CD4-positive, alpha-beta T cell (primary cell): ENCODE measurements at regions of chr19 and their contacts with region 1.

Region 1: GRCh38 chr19:10095948-10096621 is 6.4 kb downstream of the ANGPTL6 start:
- DNase-seq: peak; percentile 78 to 98 (median 88)
- ATAC-seq: peak; percentile 88
- H3K4me3 ChIP-seq: peak overlapping the region; percentile 53
- H3K4me3 Mint-ChIP-seq: peak overlapping the region; percentile 65
- H3K27ac ChIP-seq: peak overlapping the region; percentile 48 to 56
- H3K27ac Mint-ChIP-seq: peak overlapping the region; percentile 83
- H3K4me1 ChIP-seq: peaks cover 50% of the 10 kb centered on the region
- H3K4me1 Mint-ChIP-seq: peaks cover 22% of the 10 kb centered on the region
- H3K27me3 ChIP-seq: no peaks in the 10 kb centered on the region
- H3K27me3 Mint-ChIP-seq: no peaks in the 10 kb centered on the region
- CTCF ChIP-seq: no peak

Region 2: GRCh38 chr19:10106100-10106936 is 10.2 kb after region 1 on chr19 and contains the start of gene PPAN:
- CTCF ChIA-PET with region 1: interaction called, 13 read pairs
- POLR2A ChIA-PET with region 1: interaction called, 80 read pairs
- intact Hi-C with region 1: no loop called
- DNase-seq: peak; percentile 94 to 100 (median 98)
- ATAC-seq: peak; percentile 59
- H3K4me3 ChIP-seq: peak within 1 kb of the TSS; percentile 73
- H3K4me3 Mint-ChIP-seq: peak within 1 kb of the TSS; percentile 93
- H3K27ac ChIP-seq: peak within 1 kb of the TSS; percentile 94 to 98
- H3K27ac Mint-ChIP-seq: peak within 1 kb of the TSS; percentile 95
- H3K4me1 ChIP-seq: peaks cover 86% of the 10 kb centered on the region
- H3K4me1 Mint-ChIP-seq: peaks cover 58% of the 10 kb centered on the region
- H3K27me3 ChIP-seq: no peaks in the 10 kb centered on the region
- H3K27me3 Mint-ChIP-seq: no peaks in the 10 kb centered on the region
- CTCF ChIP-seq: no peak
- total RNA-seq, gene PPAN: 119 to 127 TPM

Region 3: DNA sequence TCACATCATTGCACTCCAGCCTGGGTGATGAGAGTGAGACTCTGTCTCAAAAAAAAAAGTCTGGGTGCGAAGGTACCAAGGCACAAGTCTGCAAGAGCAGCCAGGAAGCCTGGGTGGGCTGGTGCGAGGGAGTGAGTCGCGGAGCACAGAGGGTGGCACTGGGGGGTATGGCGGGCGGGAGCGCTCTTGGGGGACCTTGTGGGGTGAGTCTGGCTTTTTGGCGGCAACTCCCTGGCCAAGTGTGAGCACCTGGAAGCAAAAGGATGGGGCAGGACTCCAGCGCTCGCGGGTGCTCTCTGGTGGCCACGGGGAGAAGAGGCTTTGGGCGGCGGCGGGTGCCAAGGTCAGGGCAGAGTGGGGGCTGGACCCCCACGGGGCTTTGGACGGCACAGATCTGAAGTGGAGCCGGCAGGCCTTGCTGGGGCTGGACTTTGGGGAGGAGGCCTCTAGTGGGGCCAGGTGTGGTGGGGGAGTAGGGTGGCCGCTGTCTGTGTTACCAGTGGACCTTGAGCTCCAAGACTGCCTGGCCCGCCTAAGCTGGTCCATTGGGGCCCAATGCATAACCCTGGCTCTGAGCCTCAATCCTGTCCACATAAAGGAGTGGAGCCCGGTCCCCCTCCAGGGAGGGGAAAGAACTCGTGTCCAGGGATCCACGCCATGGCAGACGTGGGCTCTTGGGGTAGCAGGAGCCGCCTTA is 17.0 kb after region 1 on chr19:
- CTCF ChIA-PET with region 1: interaction called, 13 read pairs
- POLR2A ChIA-PET with region 1: interaction called, 80 read pairs
- intact Hi-C with region 1: loop called in 1 of 2 experiments (anchors 1 kb)
- DNase-seq: peak; percentile 43 to 83 (median 62)
- ATAC-seq: peak; percentile 41
- H3K4me3 ChIP-seq: no peak overlapping the region
- H3K4me3 Mint-ChIP-seq: peak overlapping the region; percentile 87
- H3K27ac ChIP-seq: peak overlapping the region; percentile 47 to 63
- H3K27ac Mint-ChIP-seq: peak overlapping the region; percentile 98
- H3K4me1 ChIP-seq: peaks cover 80% of the 10 kb centered on the region
- H3K4me1 Mint-ChIP-seq: peaks cover 32% of the 10 kb centered on the region
- H3K27me3 ChIP-seq: no peaks in the 10 kb centered on the region
- H3K27me3 Mint-ChIP-seq: peaks cover 4% of the 10 kb centered on the region
- CTCF ChIP-seq: peak; percentile 59

Region 4: GRCh38 chr19:10194500-10195289 is 98.6 kb after region 1 on chr19 and contains the start of gene DNMT1:
- CTCF ChIA-PET with region 1: no interaction called
- POLR2A ChIA-PET with region 1: interaction called, 13 read pairs
- intact Hi-C with region 1: no loop called
- DNase-seq: peak; percentile 86 to 98 (median 96)
- ATAC-seq: peak; percentile 93
- H3K4me3 ChIP-seq: peak within 1 kb of the TSS; percentile 99
- H3K4me3 Mint-ChIP-seq: peak within 1 kb of the TSS; percentile 98
- H3K27ac ChIP-seq: peak within 1 kb of the TSS; percentile 77 to 80
- H3K27ac Mint-ChIP-seq: peak within 1 kb of the TSS; percentile 88
- H3K4me1 ChIP-seq: peaks cover 49% of the 10 kb centered on the region
- H3K4me1 Mint-ChIP-seq: peaks cover 32% of the 10 kb centered on the region
- H3K27me3 ChIP-seq: no peaks in the 10 kb centered on the region
- H3K27me3 Mint-ChIP-seq: no peaks in the 10 kb centered on the region
- CTCF ChIP-seq: no peak
- total RNA-seq, gene DNMT1: 159 to 160 TPM